ENCODE measurements at regions of chr16 and their contacts with region 1.

Region 1: GRCh38 chr16:88437373-88437964 is 15.6 kb upstream of the ZFPM1 start:
- DNase-seq: peak; percentile 95
- H3K4me3 ChIP-seq: peak overlapping the region in 1 of 2 experiments; percentile 52; a peak in 1 of 4 replicates
- H3K27ac ChIP-seq: no peak overlapping the region; a peak in 1 of 4 replicates
- H3K4me1 ChIP-seq: peaks cover 0 to 9% of the 10 kb centered on the region in 2 experiments; a peak in 1 of 4 replicates
- H3K27me3 ChIP-seq: no peaks in the 10 kb centered on the region
- CTCF ChIP-seq: peak; percentile 83
- EP300 ChIP-seq: no peak
- RAD21 ChIP-seq: peak; percentile 79

Region 2: GRCh38 chr16:88035292-88035691 is 402.2 kb before region 1 on chr16:
- CTCF ChIA-PET with region 1: no interaction called
- POLR2A ChIA-PET with region 1: no interaction called
- DNase-seq: no peak
- H3K4me3 ChIP-seq: no peak overlapping the region
- H3K27ac ChIP-seq: no peak overlapping the region
- H3K4me1 ChIP-seq: peaks cover 0 to 3% of the 10 kb centered on the region in 2 experiments; a peak in 1 of 4 replicates
- H3K27me3 ChIP-seq: no peaks in the 10 kb centered on the region
- CTCF ChIP-seq: no peak
- EP300 ChIP-seq: no peak
- RAD21 ChIP-seq: no peak

Region 3: DNA sequence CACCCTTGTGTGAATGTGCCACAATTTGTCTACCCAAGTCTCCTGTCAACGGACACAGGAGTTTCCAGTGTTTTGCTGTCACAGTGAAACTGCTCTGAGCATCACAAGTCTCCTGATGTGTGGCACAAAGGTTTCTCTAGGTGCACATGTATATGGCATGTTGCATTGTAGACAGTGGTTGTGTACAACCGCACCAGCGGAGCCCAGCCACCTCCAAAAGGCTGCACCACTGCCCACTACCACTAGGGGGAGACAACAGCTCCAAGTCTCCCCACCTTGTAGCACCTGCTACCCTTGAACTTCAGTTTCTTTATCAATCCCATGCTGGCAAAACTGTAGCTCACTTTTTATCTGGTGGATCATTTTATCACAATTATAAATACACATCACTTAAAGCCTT is 150.2 kb before region 1 on chr16:
- CTCF ChIA-PET with region 1: interaction called, 25 read pairs
- POLR2A ChIA-PET with region 1: no interaction called
- DNase-seq: peak; percentile 60
- H3K4me3 ChIP-seq: no peak overlapping the region
- H3K27ac ChIP-seq: no peak overlapping the region; a peak in 1 of 4 replicates
- H3K4me1 ChIP-seq: peaks cover 0 to 58% of the 10 kb centered on the region in 2 experiments; a peak in 2 of 4 replicates
- H3K27me3 ChIP-seq: no peaks in the 10 kb centered on the region
- CTCF ChIP-seq: peak; percentile 84
- EP300 ChIP-seq: no peak
- RAD21 ChIP-seq: peak; percentile 60

Region 4: GRCh38 chr16:88424587-88425235 is 12.8 kb before region 1 on chr16:
- CTCF ChIA-PET with region 1: interaction called, 37 read pairs
- POLR2A ChIA-PET with region 1: no interaction called
- DNase-seq: no peak
- H3K4me3 ChIP-seq: no peak overlapping the region
- H3K27ac ChIP-seq: no peak overlapping the region
- H3K4me1 ChIP-seq: peaks cover 0 to 8% of the 10 kb centered on the region in 2 experiments; a peak in 1 of 4 replicates
- H3K27me3 ChIP-seq: no peaks in the 10 kb centered on the region
- CTCF ChIP-seq: no peak
- EP300 ChIP-seq: no peak
- RAD21 ChIP-seq: no peak

Region 5: DNA sequence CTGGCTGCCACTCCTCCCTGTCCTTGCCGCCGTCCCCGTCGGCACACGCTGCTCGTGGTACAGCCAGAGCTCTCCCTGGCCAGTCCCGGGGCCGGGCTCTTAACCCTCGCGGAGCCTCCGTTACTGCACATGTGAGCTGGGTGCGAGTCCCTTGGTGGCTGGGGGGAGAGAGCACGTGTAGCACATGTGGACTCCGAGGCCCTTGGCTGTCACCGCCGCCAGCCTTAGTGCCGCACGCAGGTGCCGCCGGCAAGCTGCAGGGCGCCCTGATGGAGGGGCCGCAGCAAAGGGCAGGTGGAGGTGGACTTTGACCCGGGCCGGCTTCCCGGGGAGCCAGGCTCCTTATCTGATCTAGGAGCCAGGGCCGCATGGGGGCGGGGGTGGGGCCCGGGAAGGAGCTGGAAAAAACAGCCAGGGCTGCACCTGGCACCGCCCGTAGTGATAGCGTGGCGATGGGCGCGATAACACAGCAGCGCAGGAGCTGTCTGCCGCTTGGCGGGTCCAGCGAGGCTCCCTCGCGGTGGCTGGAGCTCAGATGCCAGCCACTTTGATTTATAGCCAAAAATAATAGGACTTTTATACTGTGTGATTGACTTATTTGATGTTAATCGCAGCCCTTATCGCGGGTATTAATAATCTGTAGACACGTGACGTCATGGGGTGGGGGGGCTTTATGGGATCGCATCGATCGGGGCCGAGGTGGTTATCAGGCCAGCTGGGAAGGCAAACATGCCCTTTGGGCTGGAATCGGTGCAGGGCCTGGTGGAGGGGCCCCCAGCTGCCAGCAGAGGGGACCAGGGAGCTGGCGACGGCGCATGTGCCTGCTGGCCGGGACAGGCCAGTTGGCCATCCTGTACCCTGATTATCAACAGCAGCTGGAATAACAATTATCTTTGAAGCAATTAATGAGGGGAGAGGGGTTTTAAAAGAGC is 50.7 kb after region 1 on chr16:
- CTCF ChIA-PET with region 1: interaction called, 14 read pairs
- POLR2A ChIA-PET with region 1: no interaction called
- DNase-seq: peak; percentile 91
- H3K4me3 ChIP-seq: no peak overlapping the region
- H3K27ac ChIP-seq: peak overlapping the region in 1 of 2 experiments; percentile 63; a peak in 2 of 4 replicates
- H3K4me1 ChIP-seq: peaks cover 0 to 28% of the 10 kb centered on the region in 2 experiments; a peak in 1 of 4 replicates
- H3K27me3 ChIP-seq: no peaks in the 10 kb centered on the region
- CTCF ChIP-seq: no peak
- EP300 ChIP-seq: peak in 1 of 2 experiments; percentile 61; a peak in 2 of 4 replicates
- RAD21 ChIP-seq: peak; percentile 61

Region 6: GRCh38 chr16:88561485-88562369 is 124.3 kb after region 1 on chr16:
- CTCF ChIA-PET with region 1: interaction called, 30 read pairs
- POLR2A ChIA-PET with region 1: no interaction called
- DNase-seq: peak; percentile 91
- H3K4me3 ChIP-seq: no peak overlapping the region; a peak in 1 of 4 replicates
- H3K27ac ChIP-seq: no peak overlapping the region
- H3K4me1 ChIP-seq: peaks cover 0 to 8% of the 10 kb centered on the region in 2 experiments; a peak in 1 of 4 replicates
- H3K27me3 ChIP-seq: peaks cover 16% of the 10 kb centered on the region; the same call in 1 of the 2 replicates
- CTCF ChIP-seq: peak; percentile 61
- EP300 ChIP-seq: no peak
- RAD21 ChIP-seq: peak; percentile 80

Region 7: GRCh38 chr16:88838991-88839529 is 401.6 kb after region 1 on chr16:
- CTCF ChIA-PET with region 1: no interaction called
- POLR2A ChIA-PET with region 1: no interaction called
- DNase-seq: peak; percentile 52
- H3K4me3 ChIP-seq: no peak overlapping the region
- H3K27ac ChIP-seq: no peak overlapping the region
- H3K4me1 ChIP-seq: no peaks in the 10 kb centered on the region
- H3K27me3 ChIP-seq: no peaks in the 10 kb centered on the region
- CTCF ChIP-seq: no peak
- EP300 ChIP-seq: no peak
- RAD21 ChIP-seq: no peak